Right ventricle myocardium superior (tissue), 1 donor: ENCODE measurements at regions of chr11 and their contacts with region 1.

Region 1: GRCh38 chr11:61954851-61955421 is 4.8 kb downstream of the BEST1 start:
- DNase-seq: peak; percentile 81
- ATAC-seq: peak; percentile 87

Region 2: GRCh38 chr11:61816736-61817455 is 138.0 kb before region 1 on chr11 and contains the start of gene FADS1:
- intact Hi-C with region 1: loop called (anchors 5 kb)
- DNase-seq: peak; percentile 94
- ATAC-seq: peak; percentile 69
- total RNA-seq, gene FADS1: 21.3 TPM